MCF 10A (cell line): ENCODE measurements at regions of chr17 and their contacts with region 1.

Region 1: DNA sequence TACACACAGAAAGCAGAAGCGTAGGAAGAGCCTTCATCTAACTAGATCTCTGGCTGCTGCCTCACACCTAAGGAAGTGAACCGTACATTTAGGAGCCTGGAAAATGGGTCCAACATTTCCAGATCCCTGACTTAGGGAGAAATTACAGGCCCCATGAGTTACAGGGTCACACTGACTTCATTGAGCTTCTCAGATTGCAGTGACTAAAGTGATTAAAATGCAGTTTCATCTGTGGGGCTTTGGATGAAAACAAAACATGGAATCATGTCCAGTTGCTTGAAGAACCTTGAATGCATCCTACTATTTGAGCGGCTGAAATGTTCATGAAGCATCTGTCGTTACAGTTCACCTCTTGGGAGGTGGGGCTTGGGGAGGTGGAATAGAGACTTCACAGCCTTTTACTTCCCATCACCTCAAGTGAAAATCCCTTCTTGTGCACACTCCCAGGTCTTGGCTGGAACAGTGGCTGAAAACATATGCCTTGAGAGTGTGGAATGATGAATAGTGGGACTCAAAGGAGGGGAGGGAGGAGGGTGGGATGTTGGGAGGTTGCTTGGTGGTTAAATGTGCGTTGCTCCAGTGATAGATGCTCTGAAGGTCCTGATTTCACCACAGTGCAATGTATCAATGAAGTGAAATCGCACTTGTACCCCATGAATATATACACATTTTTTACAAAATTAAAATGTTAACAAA is 19.7 kb downstream of the TEKT3 start:
- DNase-seq: no peak
- H3K4me3 Mint-ChIP-seq: no peak overlapping the region
- H3K27ac Mint-ChIP-seq: no peak overlapping the region
- H3K4me1 Mint-ChIP-seq: no peaks in the 10 kb centered on the region
- H3K27me3 Mint-ChIP-seq: peaks cover 50% of the 10 kb centered on the region
- CTCF ChIP-seq: no peak

Region 2: GRCh38 chr17:15213381-15214087 is 108.2 kb before region 1 on chr17:
- CTCF ChIA-PET with region 1: no interaction called
- POLR2A ChIA-PET with region 1: no interaction called
- intact Hi-C with region 1: no loop called
- DNase-seq: peak; percentile 62
- H3K4me3 Mint-ChIP-seq: no peak overlapping the region
- H3K27ac Mint-ChIP-seq: no peak overlapping the region
- H3K4me1 Mint-ChIP-seq: no peaks in the 10 kb centered on the region
- H3K27me3 Mint-ChIP-seq: peaks cover 12% of the 10 kb centered on the region
- CTCF ChIP-seq: peak; percentile 46

Region 3: GRCh38 chr17:15273141-15273793 is 48.4 kb before region 1 on chr17:
- CTCF ChIA-PET with region 1: no interaction called
- POLR2A ChIA-PET with region 1: no interaction called
- intact Hi-C with region 1: loop called (anchors 10 kb)
- DNase-seq: peak; percentile 81
- H3K4me3 Mint-ChIP-seq: no peak overlapping the region
- H3K27ac Mint-ChIP-seq: no peak overlapping the region
- H3K4me1 Mint-ChIP-seq: peaks cover 13% of the 10 kb centered on the region
- H3K27me3 Mint-ChIP-seq: peaks cover 14% of the 10 kb centered on the region
- CTCF ChIP-seq: no peak

Region 4: GRCh38 chr17:15341385-15341849 is 19.7 kb after region 1 on chr17 and contains the start of gene TEKT3:
- CTCF ChIA-PET with region 1: no interaction called
- POLR2A ChIA-PET with region 1: no interaction called
- intact Hi-C with region 1: no loop called
- DNase-seq: peak; percentile 43
- H3K4me3 Mint-ChIP-seq: peak within 1 kb of the TSS; percentile 67
- H3K27ac Mint-ChIP-seq: no peak within 1 kb of the TSS
- H3K4me1 Mint-ChIP-seq: no peaks in the 10 kb centered on the region
- H3K27me3 Mint-ChIP-seq: peaks cover 41% of the 10 kb centered on the region
- CTCF ChIP-seq: no peak
- total RNA-seq, gene TEKT3: not detected in 2 replicates